Right cardiac atrium (tissue), 5 donors: ENCODE measurements at regions of chr3 and their contacts with region 1.

Region 1: DNA sequence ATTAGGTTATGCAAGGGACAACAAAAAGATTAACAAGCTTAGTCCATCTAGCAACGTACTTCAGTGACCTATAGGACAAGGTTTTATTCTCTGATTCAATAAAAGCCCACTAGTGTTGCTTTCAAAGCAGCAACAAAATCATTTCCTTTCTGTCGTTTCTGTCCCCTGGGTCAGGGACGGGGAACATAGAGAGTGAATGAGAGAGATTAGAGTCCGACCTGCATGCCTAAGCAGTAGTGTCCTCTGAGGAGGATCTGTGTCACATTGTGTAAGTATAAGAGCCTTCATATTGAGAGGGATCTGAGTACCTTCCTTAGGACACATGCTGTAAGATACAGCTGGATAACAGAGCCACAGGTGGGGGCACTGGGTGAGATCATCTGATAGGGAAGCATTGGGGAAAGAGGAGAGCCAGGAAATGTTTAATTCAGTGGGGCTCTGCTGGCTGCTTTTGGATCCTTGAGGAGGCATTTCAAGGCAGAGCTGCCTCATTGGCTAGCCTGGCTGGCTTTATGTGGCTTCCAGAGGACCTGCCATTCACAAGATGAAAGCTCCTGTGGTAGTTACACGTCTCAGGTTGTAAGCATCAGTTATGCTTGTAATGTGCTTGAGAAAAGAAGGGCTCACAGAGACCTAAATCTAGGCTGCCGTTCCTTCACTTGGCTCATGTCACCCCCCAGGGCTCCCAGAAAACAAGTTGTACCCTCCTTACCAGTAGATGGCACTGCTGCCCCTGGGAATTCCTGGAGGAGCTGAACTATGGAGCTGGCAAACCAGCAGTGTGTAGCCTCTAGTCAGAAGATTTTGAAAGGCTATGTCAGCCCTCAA is 2.7 kb downstream of the TMEM108 start:
- DNase-seq: peak; percentile 78 to 85 (median 80)
- ATAC-seq: peak; percentile 77 to 82
- H3K4me3 ChIP-seq: no peak overlapping the region
- H3K27ac ChIP-seq: no peak overlapping the region
- H3K4me1 ChIP-seq: no peaks in the 10 kb centered on the region
- H3K27me3 ChIP-seq: no peaks in the 10 kb centered on the region

Region 2: GRCh38 chr3:133077688-133078087 is 36.8 kb after region 1 on chr3:
- intact Hi-C with region 1: no loop called
- DNase-seq: no peak
- ATAC-seq: no peak
- H3K4me3 ChIP-seq: no peak overlapping the region
- H3K27ac ChIP-seq: no peak overlapping the region
- H3K4me1 ChIP-seq: no peaks in the 10 kb centered on the region
- H3K27me3 ChIP-seq: no peaks in the 10 kb centered on the region

Region 3: GRCh38 chr3:133377396-133377795 is 336.5 kb after region 1 on chr3:
- intact Hi-C with region 1: loop called (anchors 2 to 5 kb)
- DNase-seq: no peak
- ATAC-seq: peak; percentile 46 to 60
- H3K4me3 ChIP-seq: no peak overlapping the region
- H3K27ac ChIP-seq: no peak overlapping the region
- H3K4me1 ChIP-seq: no peaks in the 10 kb centered on the region
- H3K27me3 ChIP-seq: no peaks in the 10 kb centered on the region

Region 4: DNA sequence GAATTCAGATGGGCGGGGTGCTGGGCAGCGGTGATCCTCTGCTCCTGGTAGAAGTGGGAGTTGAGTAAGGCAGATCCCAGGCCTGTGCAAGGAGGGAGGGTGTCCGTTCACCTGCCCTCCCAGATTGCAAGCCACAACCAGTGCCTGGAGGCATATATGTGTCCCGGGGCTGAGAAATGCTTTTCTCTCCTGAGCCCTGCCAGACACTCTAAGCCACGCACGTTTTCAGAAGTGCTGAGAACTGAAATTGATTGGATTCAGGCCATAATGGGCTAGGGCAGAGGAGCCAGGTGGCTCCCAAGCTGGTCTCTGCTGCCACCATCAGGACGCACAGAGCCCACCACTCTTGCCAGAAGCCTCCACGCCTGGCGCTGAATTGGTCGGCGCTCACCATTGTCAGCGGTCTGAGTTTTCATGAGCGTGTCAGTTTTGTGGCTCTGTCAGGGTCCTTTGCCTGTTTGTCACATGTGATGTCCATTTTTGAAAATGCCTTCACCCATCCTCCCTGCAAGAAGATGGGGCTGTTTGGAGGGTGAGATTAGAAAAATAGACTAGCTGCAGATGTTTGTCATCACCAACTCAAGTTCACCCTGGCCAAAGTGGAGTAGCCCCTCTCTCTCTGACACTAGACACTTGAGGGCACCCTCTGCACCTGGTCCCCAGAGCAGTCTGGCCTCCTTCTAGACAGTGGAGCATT is 343.6 kb after region 1 on chr3:
- intact Hi-C with region 1: loop called in 2 of 4 experiments (anchors 2 to 5 kb)
- DNase-seq: peak; percentile 70 to 86 (median 85)
- ATAC-seq: peak; percentile 87 to 90
- H3K4me3 ChIP-seq: no peak overlapping the region
- H3K27ac ChIP-seq: no peak overlapping the region
- H3K4me1 ChIP-seq: no peaks in the 10 kb centered on the region
- H3K27me3 ChIP-seq: no peaks in the 10 kb centered on the region

Region 5: DNA sequence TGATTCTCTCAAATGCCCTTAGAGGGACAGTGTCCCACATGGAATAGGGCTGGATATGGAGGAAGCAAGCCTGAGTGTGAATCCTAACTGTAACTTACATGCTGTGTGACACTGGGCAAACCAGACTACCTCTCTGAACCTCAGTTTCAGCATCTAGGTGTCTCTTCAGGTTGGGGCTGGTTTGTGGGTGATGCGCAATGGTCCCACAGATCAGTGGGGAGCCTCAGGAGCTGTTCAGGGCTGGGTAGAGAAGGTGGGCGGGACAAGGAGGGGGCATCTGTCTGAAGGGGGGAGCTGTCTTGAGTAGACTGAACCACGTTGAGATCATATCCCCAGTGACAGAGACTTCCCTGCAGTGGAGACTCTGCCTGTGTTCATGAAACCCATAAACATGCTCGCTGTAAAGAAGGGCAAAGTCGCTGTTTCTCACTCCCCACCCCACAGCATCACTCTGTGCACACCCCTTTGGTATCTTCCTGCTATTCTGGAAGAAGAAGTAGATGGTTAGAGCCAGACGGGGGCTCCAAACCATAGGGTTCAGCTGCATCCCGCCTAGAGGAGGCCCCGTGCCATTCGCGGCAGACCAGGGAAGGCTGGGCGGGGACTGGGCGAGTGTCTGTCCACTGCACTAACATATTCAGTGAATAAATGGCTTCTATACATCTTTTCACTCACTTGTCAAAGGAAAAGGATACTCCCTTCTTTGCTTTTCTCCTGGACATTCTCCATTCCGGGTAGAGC is 793.1 kb after region 1 on chr3:
- intact Hi-C with region 1: no loop called
- DNase-seq: no peak
- ATAC-seq: no peak
- H3K4me3 ChIP-seq: no peak overlapping the region
- H3K27ac ChIP-seq: no peak overlapping the region
- H3K4me1 ChIP-seq: peaks cover 7% of the 10 kb centered on the region
- H3K27me3 ChIP-seq: no peaks in the 10 kb centered on the region